Activated naive CD4-positive, alpha-beta T cell treated with anti-CD3 and anti-CD28 coated beads for 36 hours (primary cell): ENCODE measurements at regions of chr2 and their contacts with region 1.

Region 1: DNA sequence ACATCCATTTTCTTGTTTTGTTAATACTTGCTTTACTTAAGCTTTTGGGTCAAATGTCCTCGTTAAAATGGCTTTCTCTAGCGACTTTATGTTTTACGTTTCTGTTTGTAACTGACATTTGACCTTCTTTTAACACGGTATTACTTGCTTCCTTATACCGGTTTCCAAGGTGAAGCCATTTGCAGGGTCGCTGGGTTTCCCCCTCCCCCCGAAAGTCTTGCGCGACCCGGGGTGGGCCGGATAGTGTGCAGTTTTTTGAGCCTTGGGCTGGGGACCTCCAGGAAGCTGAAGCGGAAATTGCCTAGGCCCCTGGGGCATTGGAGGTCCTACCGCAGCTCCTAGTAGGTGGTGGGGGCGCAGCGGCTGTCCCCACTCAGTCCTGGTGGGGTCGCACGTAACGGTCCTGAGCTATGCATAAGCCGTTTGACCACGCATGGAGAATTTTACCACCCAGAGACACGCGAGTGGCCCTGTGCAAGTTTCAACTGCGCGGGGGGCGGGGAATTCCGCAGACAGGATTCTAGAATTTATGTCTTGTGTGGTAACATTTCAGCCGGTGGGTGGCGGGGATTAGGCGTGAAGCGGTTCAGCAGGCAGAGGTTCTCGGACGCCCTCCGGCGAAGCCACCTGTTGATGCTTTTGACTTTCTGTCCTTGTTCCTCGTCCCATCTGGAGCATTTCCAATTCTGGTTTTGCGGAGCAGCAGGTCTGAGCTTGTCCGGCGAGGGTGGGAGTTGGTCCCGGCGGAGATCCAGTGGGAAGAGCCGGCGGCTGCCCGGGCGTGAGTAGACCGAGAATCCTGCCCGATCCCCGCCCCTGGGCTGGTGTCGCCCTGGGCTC is 2.4 kb downstream of the CFLAR start:
- DNase-seq: peak; percentile 94
- H3K4me3 Mint-ChIP-seq: peak overlapping the region; percentile 96
- H3K27ac Mint-ChIP-seq: peak overlapping the region; percentile 100
- H3K4me1 Mint-ChIP-seq: peaks cover 41% of the 10 kb centered on the region
- H3K27me3 Mint-ChIP-seq: no peaks in the 10 kb centered on the region

Region 2: GRCh38 chr2:200864176-200864976 is 254.0 kb before region 1 on chr2 and contains the start of gene CLK1:
- CTCF ChIA-PET with region 1: interaction called, 3 read pairs
- intact Hi-C with region 1: loop called (anchors 1 kb)
- DNase-seq: peak; percentile 98
- H3K4me3 Mint-ChIP-seq: peak within 1 kb of the TSS; percentile 98
- H3K27ac Mint-ChIP-seq: peak within 1 kb of the TSS; percentile 100
- H3K4me1 Mint-ChIP-seq: peaks cover 32% of the 10 kb centered on the region
- H3K27me3 Mint-ChIP-seq: no peaks in the 10 kb centered on the region
- total RNA-seq, gene CLK1: 174 to 196 TPM

Region 3: DNA sequence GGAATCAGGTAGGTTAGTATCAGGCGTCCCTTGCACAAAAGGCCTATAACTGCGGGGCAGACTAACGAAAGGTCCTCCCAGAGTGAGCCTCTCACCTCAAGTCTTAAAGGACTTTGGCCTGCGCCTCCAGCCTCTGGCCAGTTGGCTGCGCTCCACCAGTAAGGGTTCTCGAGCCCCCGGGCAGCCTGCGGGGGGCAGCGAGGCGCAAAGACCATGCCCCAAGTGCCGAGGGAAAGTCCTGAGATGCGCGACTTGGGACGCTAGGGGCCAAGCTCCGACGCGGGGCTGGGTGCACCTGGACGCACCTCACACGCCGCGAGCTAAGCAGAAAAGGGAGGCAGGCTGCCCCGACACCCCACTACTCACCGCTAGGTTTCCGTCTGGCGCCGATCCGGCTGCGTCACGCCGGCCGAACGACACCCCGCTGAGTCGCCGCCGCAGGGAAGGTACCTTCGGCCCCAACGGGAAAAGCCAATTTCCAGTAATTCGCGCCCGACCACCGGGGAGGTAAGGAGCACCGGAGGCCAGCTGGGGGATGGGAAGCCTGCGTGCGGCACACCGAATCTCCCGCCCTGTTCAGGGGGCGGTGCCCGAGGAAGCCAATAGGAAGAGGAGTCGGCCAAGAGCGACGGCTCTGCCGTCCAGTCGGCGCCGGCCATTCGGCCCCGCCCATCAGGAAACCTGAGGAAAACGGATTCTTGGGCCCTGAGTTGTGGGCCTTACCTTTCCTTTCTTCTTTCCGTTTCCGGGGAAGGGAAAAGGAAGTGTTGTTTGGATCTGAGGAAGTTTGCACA is 155.0 kb before region 1 on chr2 and contains the start of gene ORC2:
- CTCF ChIA-PET with region 1: interaction called, 3 read pairs
- intact Hi-C with region 1: loop called (anchors 1 kb)
- DNase-seq: peak; percentile 94
- H3K4me3 Mint-ChIP-seq: peak within 1 kb of the TSS; percentile 88
- H3K27ac Mint-ChIP-seq: peak within 1 kb of the TSS; percentile 94
- H3K4me1 Mint-ChIP-seq: peaks cover 56% of the 10 kb centered on the region
- H3K27me3 Mint-ChIP-seq: no peaks in the 10 kb centered on the region
- total RNA-seq, gene ORC2: 53.7 to 56.8 TPM

Region 4: GRCh38 chr2:201040867-201041628 is 77.3 kb before region 1 on chr2:
- CTCF ChIA-PET with region 1: no interaction called
- intact Hi-C with region 1: no loop called
- DNase-seq: no peak
- H3K4me3 Mint-ChIP-seq: no peak overlapping the region
- H3K27ac Mint-ChIP-seq: no peak overlapping the region
- H3K4me1 Mint-ChIP-seq: peaks cover 4% of the 10 kb centered on the region
- H3K27me3 Mint-ChIP-seq: no peaks in the 10 kb centered on the region

Region 5: DNA sequence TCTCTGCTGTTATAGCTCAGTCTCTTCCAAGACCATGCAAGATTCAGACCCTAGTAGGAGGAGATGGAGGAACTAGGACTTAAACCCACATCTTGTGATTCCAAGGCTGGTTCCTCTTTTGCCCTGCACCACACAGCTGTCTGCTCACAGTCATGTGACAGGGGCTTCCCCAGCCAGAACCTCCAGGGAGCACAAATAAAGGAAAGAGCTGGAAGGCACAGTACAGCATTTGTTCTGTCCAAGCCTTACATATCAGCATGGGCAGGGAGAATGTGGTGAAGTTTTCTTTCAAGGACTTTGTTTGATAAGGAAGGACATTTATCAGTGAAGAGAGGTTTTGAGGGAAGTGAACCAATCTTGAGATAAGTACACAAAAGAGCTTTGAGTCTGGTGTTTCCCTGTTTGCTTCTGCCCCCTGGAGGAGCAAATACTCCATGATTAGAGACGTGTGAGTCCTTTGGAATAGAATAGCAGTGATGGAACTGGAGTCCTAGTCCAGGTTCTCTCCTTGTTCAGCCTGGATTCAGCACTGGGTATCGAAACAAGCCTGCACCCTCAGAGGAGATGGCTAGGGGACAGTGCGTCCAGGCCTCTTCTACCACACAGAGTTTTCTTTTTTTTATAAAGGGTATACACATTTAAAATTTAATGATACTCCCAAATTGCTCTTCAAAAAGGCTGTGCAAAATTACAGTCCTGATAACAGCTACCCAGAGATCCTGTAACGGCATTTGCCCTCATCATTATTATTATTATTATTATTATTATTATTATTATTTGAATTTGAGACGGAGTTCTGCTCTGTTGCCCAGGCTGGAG is 40.0 kb after region 1 on chr2:
- CTCF ChIA-PET with region 1: interaction called, 35 read pairs
- intact Hi-C with region 1: loop called (anchors 1 kb)
- DNase-seq: peak; percentile 76
- H3K4me3 Mint-ChIP-seq: no peak overlapping the region
- H3K27ac Mint-ChIP-seq: peak overlapping the region; percentile 86
- H3K4me1 Mint-ChIP-seq: peaks cover 24% of the 10 kb centered on the region
- H3K27me3 Mint-ChIP-seq: no peaks in the 10 kb centered on the region

Region 6: DNA sequence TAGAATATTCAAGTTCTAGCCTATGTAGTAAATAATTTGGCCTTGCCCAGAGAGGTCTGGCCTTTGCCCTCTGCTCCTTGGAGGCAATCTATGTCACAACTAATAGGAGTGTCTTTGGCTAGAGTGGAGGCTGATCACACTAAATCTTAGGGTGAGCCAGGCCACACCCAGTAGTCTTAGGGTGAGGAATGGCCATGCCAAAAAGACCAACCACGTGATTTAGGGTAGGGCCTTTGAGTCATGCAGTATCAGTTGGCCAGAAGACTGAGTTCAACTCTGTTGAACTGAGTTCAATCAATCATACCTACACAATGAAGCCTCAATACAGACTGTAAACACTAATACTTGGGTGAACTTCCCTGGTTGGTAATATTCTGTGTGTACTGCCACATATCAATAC is 264.8 kb after region 1 on chr2:
- CTCF ChIA-PET with region 1: no interaction called
- intact Hi-C with region 1: no loop called
- DNase-seq: no peak
- H3K4me3 Mint-ChIP-seq: no peak overlapping the region
- H3K27ac Mint-ChIP-seq: no peak overlapping the region
- H3K4me1 Mint-ChIP-seq: no peaks in the 10 kb centered on the region
- H3K27me3 Mint-ChIP-seq: no peaks in the 10 kb centered on the region